ENCODE measurements at regions of chr17 and their contacts with region 1.

Region 1: DNA sequence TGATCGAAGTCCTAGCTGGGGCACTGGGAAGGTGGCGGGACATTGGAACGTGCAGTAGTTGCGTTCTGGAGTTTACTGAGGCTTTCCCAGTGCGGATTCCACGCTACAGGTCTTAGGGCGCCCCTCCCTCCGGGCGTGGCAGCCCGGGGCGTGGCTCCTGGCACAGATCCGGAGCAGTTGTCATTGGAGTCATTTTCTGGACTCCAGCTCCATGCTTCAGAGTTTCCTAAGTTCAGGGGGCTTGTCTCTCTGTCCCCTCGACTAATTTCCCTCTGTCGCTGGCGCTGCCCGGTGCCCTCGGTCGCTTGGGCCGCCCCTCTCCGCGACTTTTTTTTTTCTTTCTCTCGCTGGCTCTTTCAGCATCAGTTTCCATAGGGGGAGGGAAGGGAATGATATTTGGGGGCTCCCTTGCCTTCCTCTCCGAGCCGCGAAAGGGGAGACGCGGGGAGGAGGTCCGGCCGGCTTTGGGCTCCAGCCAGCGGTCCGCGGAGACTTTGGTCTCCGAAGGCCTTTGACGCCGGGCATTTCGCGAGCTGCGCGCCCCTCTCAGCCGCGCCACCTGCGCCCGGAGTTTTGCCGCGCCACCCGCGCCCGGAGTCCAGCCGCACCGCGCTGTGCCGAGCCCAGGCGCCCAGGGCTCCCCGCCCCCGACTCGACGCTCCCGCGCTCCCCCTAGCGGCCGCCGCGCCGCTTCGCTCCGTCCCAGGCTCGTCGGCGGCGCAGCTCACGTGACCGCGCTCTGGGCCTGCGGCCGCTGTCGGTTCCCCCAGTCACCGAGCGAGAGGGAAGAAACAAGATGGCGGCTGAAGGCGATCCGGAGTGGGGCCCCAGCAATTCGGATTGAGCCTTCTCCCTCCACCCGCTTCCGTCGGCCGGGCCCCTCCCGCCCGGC is at the start of gene BPTF:
- DNase-seq: peak; percentile 93 to 97
- ATAC-seq: peak; percentile 81 to 94 (median 87)
- H3K4me3 ChIP-seq: peak within 1 kb of the TSS; percentile 96
- H3K4me3 Mint-ChIP-seq: peak within 1 kb of the TSS; percentile 96
- H3K27ac ChIP-seq: peak within 1 kb of the TSS; percentile 81
- H3K27ac Mint-ChIP-seq: peak within 1 kb of the TSS; percentile 90 to 97
- H3K4me1 ChIP-seq: peaks cover 29% of the 10 kb centered on the region
- H3K4me1 Mint-ChIP-seq: peaks cover 33 to 42% of the 10 kb centered on the region in 2 donors
- H3K27me3 ChIP-seq: no peaks in the 10 kb centered on the region
- H3K27me3 Mint-ChIP-seq: no peaks in the 10 kb centered on the region
- CTCF ChIP-seq: peak; percentile 92
- total RNA-seq, gene BPTF: 168 to 205 (median 193) TPM

Region 2: DNA sequence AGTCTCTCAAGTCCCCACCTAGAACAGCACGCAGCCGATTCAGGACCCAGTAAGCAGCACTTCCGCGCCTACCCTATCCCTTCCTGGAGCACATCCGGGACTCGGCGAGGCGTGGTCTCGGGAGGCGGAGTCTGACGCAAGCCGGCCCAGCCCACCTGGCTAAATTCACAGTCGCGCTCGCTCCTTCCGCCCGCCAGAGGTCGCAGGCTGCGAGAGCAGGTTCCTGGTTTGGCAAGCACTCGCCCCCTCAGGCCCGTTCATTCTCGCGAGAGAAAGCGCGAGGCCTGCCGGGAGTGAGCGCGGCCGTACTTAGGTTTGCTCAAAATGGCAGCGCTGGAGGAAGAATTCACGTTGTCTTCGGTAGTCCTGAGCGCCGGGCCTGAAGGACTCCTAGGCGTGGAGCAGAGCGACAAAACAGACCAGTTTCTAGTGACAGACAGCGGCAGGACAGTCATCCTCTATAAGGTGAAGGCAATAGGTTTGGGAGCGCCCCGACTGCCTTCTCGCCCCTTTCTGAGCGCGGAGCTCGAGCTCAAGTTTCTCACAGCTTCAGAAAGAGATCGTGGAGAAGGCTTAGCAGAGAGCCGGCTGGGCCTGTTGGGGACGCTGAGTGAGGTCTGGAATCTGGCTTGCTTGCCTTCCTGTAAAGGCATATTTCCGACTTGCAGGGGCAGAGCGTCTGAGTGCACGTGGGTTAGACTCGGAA is 107.2 kb before region 1 on chr17 and contains the start of gene NOL11:
- intact Hi-C with region 1: loop called (anchors 1 kb)
- DNase-seq: peak; percentile 99 to 100
- ATAC-seq: peak; percentile 94 to 99 (median 94)
- H3K4me3 ChIP-seq: peak within 1 kb of the TSS; percentile 91
- H3K4me3 Mint-ChIP-seq: peak within 1 kb of the TSS; percentile 100
- H3K27ac ChIP-seq: peak within 1 kb of the TSS; percentile 87
- H3K27ac Mint-ChIP-seq: peak within 1 kb of the TSS; percentile 98 to 99
- H3K4me1 ChIP-seq: peaks cover 17% of the 10 kb centered on the region
- H3K4me1 Mint-ChIP-seq: peaks cover 18 to 23% of the 10 kb centered on the region in 2 donors
- H3K27me3 ChIP-seq: no peaks in the 10 kb centered on the region
- H3K27me3 Mint-ChIP-seq: no peaks in the 10 kb centered on the region
- CTCF ChIP-seq: peak; percentile 81
- total RNA-seq, gene NOL11: 43.3 to 55.2 (median 49.1) TPM

Region 3: DNA sequence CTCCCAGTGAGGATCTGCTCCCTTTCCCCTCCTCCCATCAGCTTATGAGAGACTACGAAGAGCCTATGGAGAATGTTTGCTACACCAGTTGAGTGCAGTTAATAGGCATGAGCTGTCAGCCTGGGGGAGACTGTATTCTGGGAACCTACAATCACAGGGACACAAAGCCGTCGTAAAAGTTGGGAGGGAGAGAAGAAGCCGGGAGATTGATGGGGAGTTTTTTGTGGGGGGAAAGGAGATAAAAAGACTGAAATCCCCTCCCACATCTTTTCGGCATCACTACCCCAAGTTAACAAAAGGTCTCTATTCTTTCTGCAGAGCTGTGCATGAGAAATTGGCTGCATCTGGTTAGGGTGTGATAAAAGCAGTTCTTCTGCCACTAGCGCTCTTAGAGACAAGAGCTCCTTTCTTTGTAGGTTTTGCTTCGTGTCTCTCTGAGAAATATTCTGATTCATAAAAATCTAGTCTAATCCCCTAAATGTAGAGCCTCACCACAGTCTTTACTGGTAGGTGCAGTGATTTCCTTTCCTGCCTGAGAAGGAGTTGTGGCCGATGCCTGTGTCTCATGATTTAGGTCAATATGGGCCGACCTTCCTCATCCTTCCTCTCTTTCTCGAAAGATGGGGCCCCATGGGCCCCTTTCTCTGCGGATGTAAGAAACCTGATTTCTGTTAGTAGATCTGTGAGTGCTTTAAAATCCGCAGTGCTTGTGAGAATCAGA is 77.7 kb after region 1 on chr17:
- intact Hi-C with region 1: no loop called
- DNase-seq: no peak
- ATAC-seq: no peak
- H3K4me3 ChIP-seq: no peak overlapping the region
- H3K4me3 Mint-ChIP-seq: no peak overlapping the region
- H3K27ac ChIP-seq: no peak overlapping the region
- H3K27ac Mint-ChIP-seq: no peak overlapping the region
- H3K4me1 ChIP-seq: no peaks in the 10 kb centered on the region
- H3K4me1 Mint-ChIP-seq: no peaks in the 10 kb centered on the region
- H3K27me3 ChIP-seq: no peaks in the 10 kb centered on the region
- H3K27me3 Mint-ChIP-seq: no peaks in the 10 kb centered on the region
- CTCF ChIP-seq: no peak

Measured in natural killer cell (primary cell).